ENCODE measurements at regions of chr9 and their contacts with region 1.

Region 1: DNA sequence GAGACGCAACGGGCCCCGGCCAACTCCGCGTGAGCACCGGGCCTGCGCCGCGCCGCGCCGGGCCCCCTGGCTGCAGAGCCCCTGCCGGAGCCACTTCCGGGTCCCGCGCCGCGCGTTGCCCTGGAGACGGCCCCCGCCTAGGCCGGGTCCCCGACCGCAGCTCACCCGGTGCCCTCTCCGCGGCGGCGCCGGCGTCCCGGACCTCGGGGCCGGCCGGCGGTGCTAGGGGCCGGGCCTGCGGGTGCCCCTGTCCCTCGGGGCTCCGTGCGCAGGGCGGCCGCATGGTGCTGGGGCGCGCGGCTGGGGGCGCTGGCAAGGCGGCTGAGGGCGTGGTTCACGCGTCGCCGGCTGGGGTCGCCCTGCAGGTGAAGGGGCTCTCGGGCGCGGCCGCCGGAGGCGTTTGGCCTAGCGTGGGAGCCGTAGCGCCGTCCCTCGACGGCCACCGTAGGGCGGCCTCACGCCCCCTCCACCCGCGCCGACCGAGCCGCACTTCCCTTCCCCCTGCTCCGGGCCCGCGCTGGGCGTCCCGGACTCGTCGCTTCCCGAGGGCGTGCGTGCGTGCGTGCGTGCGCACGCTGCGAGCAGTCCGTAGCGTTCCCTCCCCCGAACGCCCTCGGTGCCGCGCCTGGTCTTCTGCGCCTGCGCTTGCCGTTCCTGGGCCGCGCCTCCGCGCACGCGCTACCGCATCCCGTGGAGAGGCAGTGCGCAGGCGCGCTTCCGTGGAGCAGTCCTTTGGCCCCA is at the start of gene TMEM250:
- DNase-seq: peak; percentile 71
- H3K4me3 ChIP-seq: peak within 1 kb of the TSS; percentile 68
- CTCF ChIP-seq: no peak

Region 2: GRCh38 chr9:135602789-135603481 is 515.6 kb before region 1 on chr9:
- CTCF ChIA-PET with region 1: interaction called, 16 read pairs
- POLR2A ChIA-PET with region 1: no interaction called
- DNase-seq: no peak
- H3K4me3 ChIP-seq: no peak overlapping the region
- CTCF ChIP-seq: peak; percentile 73

Region 3: DNA sequence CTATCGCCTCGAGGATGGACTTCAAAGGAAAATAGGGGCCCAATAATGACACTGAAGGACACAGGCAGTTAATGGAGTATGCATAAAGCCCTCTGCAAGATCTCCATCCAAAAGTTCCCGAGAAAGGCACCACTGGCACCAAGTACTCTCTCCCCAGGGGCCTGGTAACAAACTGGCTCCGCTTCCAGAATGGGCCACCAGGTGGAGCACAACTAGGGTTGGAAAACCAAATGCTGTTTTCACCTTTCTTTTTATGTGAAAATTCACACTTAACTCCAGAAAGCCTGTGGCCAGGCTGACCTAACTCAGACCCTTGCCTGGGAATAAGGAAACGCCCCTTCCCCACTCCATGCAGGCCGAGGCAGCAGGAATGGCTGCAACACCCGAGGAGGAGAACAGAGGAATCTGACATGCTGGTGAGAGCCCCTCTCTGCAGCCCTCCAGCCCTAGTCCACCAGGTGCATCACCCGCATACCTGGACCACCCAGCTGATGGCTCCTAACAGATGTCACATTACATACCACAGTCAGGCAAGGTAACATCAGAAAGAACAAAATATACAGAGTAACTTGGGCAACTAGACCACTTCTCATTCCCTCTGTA is 253.9 kb before region 1 on chr9:
- CTCF ChIA-PET with region 1: interaction called, 66 read pairs
- POLR2A ChIA-PET with region 1: no interaction called
- DNase-seq: no peak
- H3K4me3 ChIP-seq: no peak overlapping the region
- CTCF ChIP-seq: peak; percentile 80

Region 4: DNA sequence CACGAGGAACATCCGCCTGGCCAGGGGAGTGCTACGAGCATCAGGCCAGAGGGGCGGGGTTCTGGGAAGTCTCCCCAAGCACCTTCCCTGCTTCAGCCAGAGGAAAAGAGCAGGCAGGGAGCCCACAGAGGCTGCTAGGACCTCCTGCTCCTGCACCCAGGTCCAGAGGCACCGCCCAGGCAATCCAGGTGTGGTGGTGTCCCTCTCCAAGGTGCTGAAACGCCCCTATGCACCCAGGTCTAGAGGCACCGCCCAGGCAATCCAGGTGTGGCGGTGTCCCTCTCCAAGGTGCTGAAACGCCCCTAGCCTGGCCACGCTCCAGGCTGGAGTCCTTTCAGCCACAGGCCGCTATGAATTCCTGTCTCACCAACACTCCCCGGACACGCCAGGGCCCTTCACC is 146.6 kb before region 1 on chr9:
- CTCF ChIA-PET with region 1: interaction called, 195 read pairs
- POLR2A ChIA-PET with region 1: interaction called, 4 read pairs
- DNase-seq: no peak
- H3K4me3 ChIP-seq: no peak overlapping the region
- CTCF ChIP-seq: no peak

Region 5: DNA sequence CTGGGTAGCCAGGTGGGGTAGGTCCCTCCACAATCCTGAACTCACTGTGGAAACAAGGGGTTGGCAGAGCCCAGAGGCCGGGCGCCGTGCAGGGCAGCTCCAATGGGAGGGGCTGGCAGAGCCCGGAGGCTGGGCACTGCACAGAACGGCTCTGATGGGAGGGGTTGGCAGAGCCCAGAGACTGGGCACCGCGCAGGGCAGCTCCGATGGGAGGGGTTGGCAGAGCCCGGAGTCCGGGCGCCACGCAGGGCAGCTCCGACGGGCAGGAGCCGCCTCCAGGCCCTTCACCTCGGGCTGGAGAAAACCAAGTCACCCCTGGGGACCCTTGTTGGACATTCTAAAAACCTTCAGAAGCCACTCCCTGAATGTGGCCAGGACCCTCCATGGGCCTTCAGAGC is 32.7 kb before region 1 on chr9:
- CTCF ChIA-PET with region 1: interaction called, 46 read pairs
- POLR2A ChIA-PET with region 1: no interaction called
- DNase-seq: no peak
- H3K4me3 ChIP-seq: no peak overlapping the region
- CTCF ChIP-seq: no peak

Region 6: GRCh38 chr9:136133191-136133958 is 14.9 kb after region 1 on chr9:
- CTCF ChIA-PET with region 1: interaction called, 22 read pairs
- POLR2A ChIA-PET with region 1: no interaction called
- DNase-seq: no peak
- H3K4me3 ChIP-seq: peak overlapping the region; percentile 39
- CTCF ChIP-seq: peak; percentile 71

Region 7: GRCh38 chr9:136147890-136148714 is 29.6 kb after region 1 on chr9:
- CTCF ChIA-PET with region 1: no interaction called
- POLR2A ChIA-PET with region 1: no interaction called
- DNase-seq: no peak
- H3K4me3 ChIP-seq: no peak overlapping the region
- CTCF ChIP-seq: no peak

Region 8: GRCh38 chr9:136297016-136297691 is 178.7 kb after region 1 on chr9:
- CTCF ChIA-PET with region 1: no interaction called
- POLR2A ChIA-PET with region 1: no interaction called
- DNase-seq: no peak
- H3K4me3 ChIP-seq: no peak overlapping the region
- CTCF ChIP-seq: no peak

Region 9: GRCh38 chr9:136363606-136364370 is 245.3 kb after region 1 on chr9 and contains the start of gene DNLZ:
- CTCF ChIA-PET with region 1: no interaction called
- POLR2A ChIA-PET with region 1: no interaction called
- DNase-seq: no peak
- H3K4me3 ChIP-seq: peak within 1 kb of the TSS; percentile 77
- CTCF ChIP-seq: peak; percentile 93